ENCODE measurements at regions of chr5 and their contacts with region 1.

Region 1: GRCh38 chr5:138752951-138753793 is at the start of gene CTNNA1:
- DNase-seq: peak; percentile 79
- H3K4me3 ChIP-seq: peak within 1 kb of the TSS; percentile 73 to 84
- H3K27ac ChIP-seq: peak within 1 kb of the TSS; percentile 98
- H3K4me1 ChIP-seq: no peaks in the 10 kb centered on the region
- H3K27me3 ChIP-seq: no peaks in the 10 kb centered on the region
- CTCF ChIP-seq: peak in 2 of 4 experiments; percentile 19 to 46
- POLR2A ChIP-seq: peak; percentile 82
- total RNA-seq, gene CTNNA1: 210 to 212 TPM

Region 2: GRCh38 chr5:138449501-138450239 is 303.5 kb before region 1 on chr5:
- intact Hi-C with region 1: no loop called
- DNase-seq: peak; percentile 87
- H3K4me3 ChIP-seq: no peak overlapping the region
- H3K27ac ChIP-seq: peak overlapping the region in 1 of 2 donors; percentile 26
- H3K4me1 ChIP-seq: peaks cover 5% of the 10 kb centered on the region
- H3K27me3 ChIP-seq: no peaks in the 10 kb centered on the region
- CTCF ChIP-seq: peak; percentile 86 to 98 (median 94)
- POLR2A ChIP-seq: no peak

Region 3: DNA sequence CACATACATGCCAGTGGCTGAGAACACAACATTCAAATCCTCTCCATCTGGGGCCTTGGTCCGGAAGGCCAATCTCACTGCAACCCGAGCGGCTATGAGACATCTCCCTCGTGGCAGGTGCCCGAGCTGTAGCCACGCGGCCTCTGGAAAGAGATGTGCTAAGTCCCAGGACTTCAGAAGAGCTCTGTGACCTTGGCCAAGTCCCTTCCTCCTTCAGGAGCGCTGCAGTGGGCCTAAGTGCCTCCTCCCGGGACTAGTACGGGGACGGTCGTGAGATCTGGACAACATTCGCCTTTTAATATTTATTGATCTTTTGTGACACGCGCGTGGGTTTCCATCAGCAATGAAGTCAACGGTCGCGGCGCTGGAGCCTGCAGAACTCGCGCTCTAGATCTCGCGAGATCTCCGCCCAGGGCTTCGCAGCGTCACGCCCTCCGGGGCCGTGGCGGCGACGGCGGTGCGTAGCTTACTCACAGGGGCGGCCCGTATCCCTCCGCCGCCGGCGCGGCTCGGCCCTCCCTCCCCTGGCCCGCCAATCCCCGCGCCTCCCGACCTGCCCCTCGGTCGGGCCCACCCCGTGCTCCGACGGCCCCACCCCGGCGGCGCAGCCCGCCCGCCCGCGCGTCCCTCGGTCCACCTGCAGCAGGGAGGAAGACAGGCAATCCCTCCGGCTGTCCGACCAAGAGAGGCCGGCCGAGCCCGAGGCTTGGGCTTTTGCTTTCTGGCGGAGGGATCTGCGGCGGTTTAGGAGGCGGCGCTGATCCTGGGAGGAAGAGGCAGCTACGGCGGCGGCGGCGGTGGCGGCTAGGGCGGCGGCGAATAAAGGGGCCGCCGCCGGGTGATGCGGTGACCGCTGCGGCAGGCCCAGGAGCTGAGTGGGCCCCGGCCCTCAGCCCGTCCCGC is 807.8 kb after region 1 on chr5 and contains the start of gene UBE2D2:
- intact Hi-C with region 1: loop called (anchors 10 kb)
- DNase-seq: peak; percentile 96
- H3K4me3 ChIP-seq: peak within 1 kb of the TSS; percentile 72 to 94
- H3K27ac ChIP-seq: peak within 1 kb of the TSS; percentile 97
- H3K4me1 ChIP-seq: no peaks in the 10 kb centered on the region
- H3K27me3 ChIP-seq: no peaks in the 10 kb centered on the region
- CTCF ChIP-seq: peak in 1 of 4 experiments; percentile 13
- POLR2A ChIP-seq: peak; percentile 85
- total RNA-seq, gene UBE2D2: 90.3 to 96.3 TPM